ENCODE measurements at regions of chr21 and their contacts with region 1.

Region 1: DNA sequence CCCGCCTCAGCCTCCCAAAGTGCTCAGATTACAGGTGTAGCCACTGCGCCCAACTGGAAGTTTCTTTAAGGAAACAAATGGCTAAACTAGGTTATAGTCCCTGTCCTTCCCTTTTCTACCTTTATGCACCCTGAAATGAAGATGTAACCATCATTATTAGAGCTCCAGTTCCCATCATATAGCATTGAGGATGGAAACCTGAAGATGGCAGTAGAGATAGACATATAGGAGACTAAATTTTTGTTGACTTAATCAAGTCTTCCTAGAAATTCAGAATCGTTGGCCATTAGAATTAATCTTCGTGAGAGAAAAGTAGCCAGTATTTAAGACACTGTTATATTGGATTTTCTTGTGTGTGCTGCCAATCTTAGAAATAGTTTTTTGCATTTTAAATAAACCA is 1016.3 kb upstream of the NCAM2 start:
- DNase-seq: peak in 1 of 2 experiments; percentile 10
- H3K4me3 ChIP-seq: no peak overlapping the region
- H3K4me3 Mint-ChIP-seq: no peak overlapping the region
- H3K27ac Mint-ChIP-seq: no peak overlapping the region
- H3K4me1 ChIP-seq: no peaks in the 10 kb centered on the region
- H3K4me1 Mint-ChIP-seq: no peaks in the 10 kb centered on the region
- H3K27me3 ChIP-seq: no peaks in the 10 kb centered on the region
- H3K27me3 Mint-ChIP-seq: no peaks in the 10 kb centered on the region
- CTCF ChIP-seq: peak in 1 of 2 experiments; percentile 24

Region 2: GRCh38 chr21:20040768-20041167 is 58.8 kb after region 1 on chr21:
- CTCF ChIA-PET with region 1: interaction called, 7 read pairs
- POLR2A ChIA-PET with region 1: no interaction called
- intact Hi-C with region 1: loop called (anchors 2 kb)
- DNase-seq: peak in 1 of 2 experiments; percentile 4
- H3K4me3 ChIP-seq: no peak overlapping the region
- H3K4me3 Mint-ChIP-seq: no peak overlapping the region
- H3K27ac Mint-ChIP-seq: no peak overlapping the region
- H3K4me1 ChIP-seq: no peaks in the 10 kb centered on the region
- H3K4me1 Mint-ChIP-seq: no peaks in the 10 kb centered on the region
- H3K27me3 ChIP-seq: no peaks in the 10 kb centered on the region
- H3K27me3 Mint-ChIP-seq: peaks cover 3% of the 10 kb centered on the region
- CTCF ChIP-seq: peak; percentile 26 to 27

Measured in Caco-2 (cell line).